ENCODE measurements at regions of chr4 and their contacts with region 1.

Region 1: GRCh38 chr4:155972098-155972497 is 18.4 kb upstream of the CTSO start:
- DNase-seq: no peak
- ATAC-seq: no peak
- H3K4me3 ChIP-seq: no peak overlapping the region
- H3K27ac ChIP-seq: no peak overlapping the region
- H3K4me1 ChIP-seq: no peaks in the 10 kb centered on the region
- H3K27me3 ChIP-seq: no peaks in the 10 kb centered on the region
- CTCF ChIP-seq: peak; percentile 43

Region 2: GRCh38 chr4:155999725-156000124 is 27.6 kb after region 1 on chr4:
- CTCF ChIA-PET with region 1: no interaction called
- POLR2A ChIA-PET with region 1: no interaction called
- in situ Hi-C with region 1: no loop called
- intact Hi-C with region 1: no loop called
- DNase-seq: no peak
- ATAC-seq: no peak
- H3K4me3 ChIP-seq: no peak overlapping the region
- H3K27ac ChIP-seq: no peak overlapping the region
- H3K4me1 ChIP-seq: no peaks in the 10 kb centered on the region
- H3K27me3 ChIP-seq: no peaks in the 10 kb centered on the region
- CTCF ChIP-seq: no peak

Region 3: DNA sequence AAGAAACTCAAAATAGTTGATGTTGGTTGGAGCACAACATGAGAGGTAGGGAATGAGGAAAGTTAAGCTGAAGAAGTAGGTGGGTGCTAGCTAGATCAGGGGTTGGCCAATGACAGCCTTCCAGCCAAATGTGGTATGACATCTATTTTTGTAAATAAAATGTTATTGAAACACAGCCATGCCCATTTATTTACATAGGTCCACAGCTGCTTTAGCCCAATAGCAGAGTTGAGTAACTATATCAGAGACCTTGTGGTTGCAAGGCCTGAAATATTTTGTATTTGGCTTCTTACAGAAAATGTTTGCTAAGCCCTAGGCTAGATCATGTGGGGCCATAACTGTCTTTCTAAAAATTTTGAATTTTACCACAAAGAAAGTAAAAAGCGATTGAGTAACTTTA is 216.5 kb after region 1 on chr4:
- CTCF ChIA-PET with region 1: no interaction called
- POLR2A ChIA-PET with region 1: interaction called, 17 read pairs
- in situ Hi-C with region 1: no loop called
- intact Hi-C with region 1: no loop called
- DNase-seq: no peak
- ATAC-seq: no peak
- H3K4me3 ChIP-seq: no peak overlapping the region
- H3K27ac ChIP-seq: no peak overlapping the region
- H3K4me1 ChIP-seq: no peaks in the 10 kb centered on the region
- H3K27me3 ChIP-seq: no peaks in the 10 kb centered on the region
- CTCF ChIP-seq: no peak

Region 4: DNA sequence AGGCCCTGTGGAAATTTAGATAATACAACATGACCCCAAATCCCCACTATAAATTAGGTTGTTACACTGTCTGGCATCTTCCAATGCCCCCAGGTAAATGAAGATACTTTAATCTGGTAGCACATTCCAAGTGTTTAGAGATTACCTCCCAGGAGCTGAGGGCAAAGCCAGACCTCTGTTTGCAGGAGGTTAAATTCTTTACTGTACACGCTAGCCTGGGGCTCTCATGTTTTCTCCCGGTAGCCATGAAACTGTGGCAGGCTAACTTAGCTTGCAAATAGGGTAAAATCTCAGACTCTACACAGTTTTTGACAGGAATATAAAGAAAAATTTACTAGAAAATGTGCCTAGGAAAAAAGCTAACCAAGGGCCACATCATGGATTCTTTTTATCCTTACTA is 549.6 kb after region 1 on chr4:
- CTCF ChIA-PET with region 1: no interaction called
- POLR2A ChIA-PET with region 1: no interaction called
- in situ Hi-C with region 1: no loop called
- intact Hi-C with region 1: loop called (anchors 5 kb)
- DNase-seq: no peak
- ATAC-seq: no peak
- H3K4me3 ChIP-seq: no peak overlapping the region
- H3K27ac ChIP-seq: no peak overlapping the region
- H3K4me1 ChIP-seq: no peaks in the 10 kb centered on the region
- H3K27me3 ChIP-seq: no peaks in the 10 kb centered on the region
- CTCF ChIP-seq: no peak